Sigmoid colon (tissue), 7 donors: ENCODE measurements at regions of chr20 and their contacts with region 1.

Region 1: GRCh38 chr20:2101865-2102584 is 398 bp downstream of the STK35 start:
- DNase-seq: peak; percentile 95
- H3K4me3 ChIP-seq: peak overlapping the region; percentile 70 to 86 (median 83)
- H3K27ac ChIP-seq: peak overlapping the region; percentile 94 to 98 (median 98)
- H3K4me1 ChIP-seq: peaks cover 3 to 45% (median 38%) of the 10 kb centered on the region in 4 donors
- H3K27me3 ChIP-seq: no peaks in the 10 kb centered on the region
- CTCF ChIP-seq: peak in 1 of 4 experiments; percentile 21
- EP300 ChIP-seq: peak in 1 of 4 donors; percentile 4
- POLR2A ChIP-seq: no peak

Region 2: DNA sequence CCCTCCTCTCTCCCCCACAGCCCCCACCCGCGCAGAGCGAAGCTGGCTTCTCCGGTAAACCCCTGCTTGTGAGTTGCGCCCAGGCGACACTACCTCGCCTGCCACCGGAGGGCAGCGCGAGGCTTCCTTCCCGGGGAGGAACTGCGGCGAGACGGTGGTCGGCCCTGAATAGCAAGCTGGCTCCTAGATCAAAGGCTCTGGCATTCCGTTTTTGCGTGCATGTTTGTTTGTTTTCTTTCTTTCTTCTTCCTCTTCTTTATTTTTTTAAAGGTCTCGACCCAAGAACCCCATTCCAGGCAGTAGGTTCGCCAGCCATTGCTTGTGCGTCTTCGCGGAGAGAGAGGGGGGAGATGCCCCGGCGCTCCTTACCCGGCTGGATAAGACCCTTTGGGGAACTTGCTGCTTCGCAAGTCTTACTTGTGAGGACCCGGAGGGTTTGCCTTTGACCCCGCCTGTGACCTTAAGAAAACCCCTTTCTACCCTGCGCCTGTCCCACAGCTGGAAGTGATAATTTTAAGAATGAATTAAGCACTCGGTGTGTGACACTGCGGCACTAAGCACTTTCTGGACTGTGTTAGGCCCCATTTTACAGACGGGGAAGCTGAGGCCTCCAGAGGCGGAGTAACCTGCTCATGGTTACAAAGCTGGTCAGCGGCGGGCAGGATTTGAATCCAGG is 299.5 kb before region 1 on chr20:
- intact Hi-C with region 1: loop called (anchors 10 kb)
- DNase-seq: peak; percentile 80
- H3K4me3 ChIP-seq: peak overlapping the region; percentile 20 to 71 (median 54)
- H3K27ac ChIP-seq: peak overlapping the region; percentile 60 to 80 (median 68)
- H3K4me1 ChIP-seq: peaks cover 0 to 23% (median 19%) of the 10 kb centered on the region in 4 donors
- H3K27me3 ChIP-seq: no peaks in the 10 kb centered on the region
- CTCF ChIP-seq: peak; percentile 53 to 72 (median 65)
- EP300 ChIP-seq: no peak
- POLR2A ChIP-seq: no peak

Region 3: DNA sequence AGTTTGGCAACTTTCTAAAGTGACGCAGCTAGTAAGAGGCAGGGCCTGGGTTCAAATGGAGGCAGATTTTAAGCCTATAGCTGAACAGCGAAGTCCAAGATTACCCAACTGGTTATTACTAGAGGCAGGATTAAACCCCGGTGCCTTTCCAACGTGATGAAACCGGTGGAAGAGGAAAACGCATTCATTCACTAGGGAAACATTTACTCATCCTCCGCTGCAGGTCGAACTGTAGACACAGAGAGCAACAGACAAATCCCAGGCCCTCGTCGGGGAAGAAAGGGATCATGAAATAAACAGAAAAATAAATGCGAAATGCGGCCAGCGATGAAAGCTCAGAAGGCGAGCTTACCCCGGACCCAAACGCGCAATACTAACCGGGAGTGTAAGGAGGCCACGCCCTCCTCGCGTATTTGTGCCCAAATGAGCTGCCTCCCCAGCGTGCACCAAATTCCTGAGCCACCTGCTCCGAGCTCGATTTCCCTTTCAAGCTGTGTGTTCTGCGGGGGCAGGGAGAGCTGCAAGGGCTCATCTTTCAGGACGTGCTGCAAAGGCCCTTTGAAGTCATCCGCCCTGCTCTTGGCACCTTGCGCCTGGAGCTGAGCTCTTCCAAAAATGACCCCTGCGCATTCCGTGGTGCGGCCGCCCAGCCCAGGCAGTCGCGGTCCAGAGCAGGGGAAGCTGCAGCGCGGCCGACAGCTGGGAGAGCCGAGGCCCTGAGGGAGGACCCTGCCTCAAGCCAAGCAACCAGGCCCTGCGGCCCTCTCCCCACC is 155.1 kb before region 1 on chr20:
- intact Hi-C with region 1: loop called (anchors 5 kb)
- DNase-seq: peak; percentile 76
- H3K4me3 ChIP-seq: peak overlapping the region; percentile 10 to 41 (median 36)
- H3K27ac ChIP-seq: peak overlapping the region in 3 of 4 donors; percentile 55 to 70 (median 63)
- H3K4me1 ChIP-seq: peaks cover 0 to 29% (median 19%) of the 10 kb centered on the region in 4 donors
- H3K27me3 ChIP-seq: no peaks in the 10 kb centered on the region
- CTCF ChIP-seq: no peak
- EP300 ChIP-seq: peak in 1 of 4 donors; percentile 1
- POLR2A ChIP-seq: no peak

Region 4: GRCh38 chr20:2022163-2022562 is 79.9 kb before region 1 on chr20:
- intact Hi-C with region 1: no loop called
- DNase-seq: no peak
- H3K4me3 ChIP-seq: no peak overlapping the region
- H3K27ac ChIP-seq: no peak overlapping the region
- H3K4me1 ChIP-seq: no peaks in the 10 kb centered on the region
- H3K27me3 ChIP-seq: peaks cover 0 to 8% (median 0%) of the 10 kb centered on the region in 3 donors
- CTCF ChIP-seq: no peak
- EP300 ChIP-seq: no peak
- POLR2A ChIP-seq: no peak

Region 5: DNA sequence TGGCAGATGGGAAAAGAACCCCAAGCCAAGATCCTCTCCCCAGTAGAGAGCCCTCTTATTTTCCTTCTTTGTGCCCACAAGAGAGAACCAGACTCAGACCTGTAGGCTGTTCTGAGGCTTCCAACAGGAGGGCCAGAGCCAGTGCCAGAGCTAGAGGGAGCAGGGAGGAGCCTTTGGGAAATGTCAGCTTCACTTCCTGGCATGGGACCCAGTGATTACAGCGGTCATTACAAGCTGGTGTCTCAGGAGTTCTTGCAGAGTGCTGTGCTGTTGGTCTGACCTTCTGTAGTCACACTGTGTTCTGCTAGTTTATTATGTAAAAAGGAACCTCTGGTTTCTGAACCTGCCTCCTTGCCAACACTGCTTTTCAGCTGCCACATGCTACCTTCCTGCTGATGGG is 38.5 kb after region 1 on chr20:
- intact Hi-C with region 1: loop called (anchors 5 kb)
- DNase-seq: peak; percentile 83
- H3K4me3 ChIP-seq: no peak overlapping the region
- H3K27ac ChIP-seq: peak overlapping the region; percentile 49 to 72 (median 56)
- H3K4me1 ChIP-seq: peaks cover 0 to 56% (median 30%) of the 10 kb centered on the region in 4 donors
- H3K27me3 ChIP-seq: no peaks in the 10 kb centered on the region
- CTCF ChIP-seq: no peak
- EP300 ChIP-seq: no peak
- POLR2A ChIP-seq: no peak

Region 6: GRCh38 chr20:2470423-2471193 is 368.6 kb after region 1 on chr20 and contains the start of gene SNRPB:
- intact Hi-C with region 1: loop called (anchors 5 kb)
- DNase-seq: peak; percentile 99
- H3K4me3 ChIP-seq: peak within 1 kb of the TSS; percentile 45 to 79 (median 69)
- H3K27ac ChIP-seq: peak within 1 kb of the TSS; percentile 85 to 95 (median 92)
- H3K4me1 ChIP-seq: peaks cover 0 to 32% (median 27%) of the 10 kb centered on the region in 4 donors
- H3K27me3 ChIP-seq: no peaks in the 10 kb centered on the region
- CTCF ChIP-seq: no peak
- EP300 ChIP-seq: peak in 1 of 4 donors; percentile 12
- POLR2A ChIP-seq: peak; percentile 62 to 83
- total RNA-seq, gene SNRPB: 80.0 to 165 (median 142) TPM